ENCODE measurements at regions of chr4 and their contacts with region 1.

Region 1: GRCh38 chr4:83012687-83013419 is 2.2 kb upstream of the LIN54 start:
- DNase-seq: peak; percentile 93 to 99 (median 97)
- ATAC-seq: peak; percentile 94
- H3K4me3 ChIP-seq: peak overlapping the region; percentile 69
- H3K4me3 Mint-ChIP-seq: peak overlapping the region; percentile 89 to 98 (median 94)
- H3K27ac ChIP-seq: peak overlapping the region; percentile 73
- H3K27ac Mint-ChIP-seq: peak overlapping the region; percentile 84 to 98 (median 93)
- H3K4me1 ChIP-seq: peaks cover 15 to 22% of the 10 kb centered on the region in 2 donors
- H3K4me1 Mint-ChIP-seq: peaks cover 32 to 54% (median 46%) of the 10 kb centered on the region in 7 donors
- H3K27me3 ChIP-seq: no peaks in the 10 kb centered on the region
- H3K27me3 Mint-ChIP-seq: no peaks in the 10 kb centered on the region

Region 2: GRCh38 chr4:81494031-81494431 is 1518.8 kb before region 1 on chr4:
- CTCF ChIA-PET with region 1: no interaction called
- POLR2A ChIA-PET with region 1: no interaction called
- intact Hi-C with region 1: loop called in 1 of 2 experiments (anchors 10 kb)
- DNase-seq: peak in 4 of 9 donors; percentile 29 to 46 (median 38)
- ATAC-seq: peak; percentile 33
- H3K4me3 ChIP-seq: peak overlapping the region; percentile 47
- H3K4me3 Mint-ChIP-seq: peak overlapping the region; percentile 47 to 82 (median 76)
- H3K27ac ChIP-seq: peak overlapping the region; percentile 66
- H3K27ac Mint-ChIP-seq: peak overlapping the region; percentile 76 to 99 (median 94)
- H3K4me1 ChIP-seq: peaks cover 27 to 39% of the 10 kb centered on the region in 2 donors
- H3K4me1 Mint-ChIP-seq: peaks cover 27 to 62% (median 49%) of the 10 kb centered on the region in 7 donors
- H3K27me3 ChIP-seq: no peaks in the 10 kb centered on the region
- H3K27me3 Mint-ChIP-seq: peaks cover 0 to 8% (median 0%) of the 10 kb centered on the region in 5 donors

Region 3: DNA sequence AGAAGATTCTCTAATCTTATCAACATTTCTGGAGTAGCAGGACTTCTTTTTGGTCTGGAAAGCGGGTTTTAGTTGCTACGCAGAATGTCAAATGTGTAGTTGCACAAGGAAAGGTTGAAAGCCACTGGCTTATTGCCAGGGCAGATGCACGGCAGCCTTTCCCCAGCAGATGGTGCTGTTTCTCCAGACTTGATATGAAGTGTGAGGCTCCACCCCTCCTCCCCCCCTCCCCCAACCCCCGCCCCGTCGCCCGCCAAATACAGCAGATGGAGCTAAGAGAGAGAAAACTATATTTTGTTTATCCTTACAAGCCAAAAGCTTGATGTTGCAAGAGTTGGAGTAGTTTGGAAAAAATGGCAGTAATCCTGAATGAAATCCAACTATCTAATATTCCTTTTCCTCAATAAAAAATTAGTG is 550.4 kb before region 1 on chr4:
- CTCF ChIA-PET with region 1: no interaction called
- POLR2A ChIA-PET with region 1: no interaction called
- intact Hi-C with region 1: loop called in 1 of 2 experiments (anchors 2 kb)
- DNase-seq: peak; percentile 60 to 83 (median 79)
- ATAC-seq: peak; percentile 96
- H3K4me3 ChIP-seq: no peak overlapping the region
- H3K4me3 Mint-ChIP-seq: no peak overlapping the region
- H3K27ac ChIP-seq: no peak overlapping the region
- H3K27ac Mint-ChIP-seq: peak overlapping the region in 1 of 9 donors; percentile 34
- H3K4me1 ChIP-seq: no peaks in the 10 kb centered on the region
- H3K4me1 Mint-ChIP-seq: peaks cover 0 to 5% (median 0%) of the 10 kb centered on the region in 7 donors
- H3K27me3 ChIP-seq: no peaks in the 10 kb centered on the region
- H3K27me3 Mint-ChIP-seq: no peaks in the 10 kb centered on the region

Region 4: GRCh38 chr4:82551714-82552113 is 461.1 kb before region 1 on chr4:
- CTCF ChIA-PET with region 1: no interaction called
- POLR2A ChIA-PET with region 1: no interaction called
- intact Hi-C with region 1: no loop called
- DNase-seq: no peak
- ATAC-seq: no peak
- H3K4me3 ChIP-seq: no peak overlapping the region
- H3K4me3 Mint-ChIP-seq: no peak overlapping the region
- H3K27ac ChIP-seq: no peak overlapping the region
- H3K27ac Mint-ChIP-seq: no peak overlapping the region
- H3K4me1 ChIP-seq: no peaks in the 10 kb centered on the region
- H3K4me1 Mint-ChIP-seq: peaks cover 0 to 1% (median 0%) of the 10 kb centered on the region in 7 donors
- H3K27me3 ChIP-seq: no peaks in the 10 kb centered on the region
- H3K27me3 Mint-ChIP-seq: peaks cover 14 to 49% (median 25%) of the 10 kb centered on the region in 5 donors

Region 5: DNA sequence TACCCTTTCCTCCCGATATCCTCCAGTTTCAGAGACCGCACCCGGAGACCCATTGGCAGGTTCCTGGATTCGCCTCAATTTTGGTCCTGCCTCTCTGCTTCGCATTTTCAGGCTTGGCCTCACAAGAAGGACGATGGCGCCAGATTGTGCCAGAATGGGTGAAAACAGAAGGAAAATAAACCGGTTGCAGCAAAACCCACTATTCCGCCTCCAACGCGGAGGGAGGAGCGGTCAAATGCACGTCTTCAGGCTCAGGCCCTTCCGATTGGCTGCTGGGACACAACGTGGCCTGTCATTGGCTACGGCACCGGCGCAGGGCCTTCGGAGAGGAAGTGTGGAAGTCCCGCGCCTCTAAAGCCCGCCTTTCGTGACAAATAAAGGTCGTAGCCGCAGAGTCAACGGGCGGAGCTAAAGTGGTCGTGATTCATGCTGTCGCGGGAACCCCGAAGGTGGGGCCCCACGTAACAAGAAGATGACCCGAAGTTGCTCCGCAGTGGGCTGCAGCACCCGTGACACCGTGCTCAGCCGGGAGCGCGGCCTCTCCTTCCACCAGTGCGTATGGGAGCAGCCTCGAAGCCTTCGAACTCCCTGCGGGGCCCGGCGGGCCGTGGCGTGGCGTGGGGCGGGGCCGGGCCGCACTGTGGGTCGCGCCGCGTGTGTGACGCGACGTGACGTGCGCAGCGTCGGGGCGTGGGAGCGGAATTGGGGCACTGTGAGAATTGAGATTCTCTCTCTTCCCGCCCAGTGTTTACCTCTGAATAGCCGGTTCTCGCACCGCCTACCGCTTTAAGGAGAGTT is 112.3 kb before region 1 on chr4 and contains the start of gene THAP9:
- CTCF ChIA-PET with region 1: interaction called, 4 read pairs
- POLR2A ChIA-PET with region 1: interaction called, 33 read pairs
- intact Hi-C with region 1: loop called (anchors 1 kb)
- DNase-seq: peak; percentile 92 to 100 (median 98)
- ATAC-seq: peak; percentile 91
- H3K4me3 ChIP-seq: peak within 1 kb of the TSS; percentile 91
- H3K4me3 Mint-ChIP-seq: no peak within 1 kb of the TSS
- H3K27ac ChIP-seq: peak within 1 kb of the TSS; percentile 98
- H3K27ac Mint-ChIP-seq: no peak within 1 kb of the TSS
- H3K4me1 ChIP-seq: peaks cover 13 to 15% of the 10 kb centered on the region in 2 donors
- H3K4me1 Mint-ChIP-seq: peaks cover 0 to 30% (median 15%) of the 10 kb centered on the region in 7 donors
- H3K27me3 ChIP-seq: no peaks in the 10 kb centered on the region
- H3K27me3 Mint-ChIP-seq: peaks cover 0 to 2% (median 0%) of the 10 kb centered on the region in 5 donors
- total RNA-seq, gene THAP9: 2.2 to 4.9 (median 4.4) TPM

Region 6: GRCh38 chr4:83074086-83074704 is 61.3 kb after region 1 on chr4:
- CTCF ChIA-PET with region 1: no interaction called
- POLR2A ChIA-PET with region 1: no interaction called
- intact Hi-C with region 1: loop called (anchors 2 kb)
- DNase-seq: peak in 8 of 9 donors; percentile 49 to 91 (median 85)
- ATAC-seq: peak; percentile 99
- H3K4me3 ChIP-seq: no peak overlapping the region
- H3K4me3 Mint-ChIP-seq: peak overlapping the region; percentile 43 to 85 (median 76)
- H3K27ac ChIP-seq: no peak overlapping the region
- H3K27ac Mint-ChIP-seq: peak overlapping the region; percentile 19 to 87 (median 79)
- H3K4me1 ChIP-seq: peaks cover 0 to 6% of the 10 kb centered on the region in 2 donors
- H3K4me1 Mint-ChIP-seq: peaks cover 8 to 28% (median 14%) of the 10 kb centered on the region in 7 donors
- H3K27me3 ChIP-seq: no peaks in the 10 kb centered on the region
- H3K27me3 Mint-ChIP-seq: no peaks in the 10 kb centered on the region

Region 7: DNA sequence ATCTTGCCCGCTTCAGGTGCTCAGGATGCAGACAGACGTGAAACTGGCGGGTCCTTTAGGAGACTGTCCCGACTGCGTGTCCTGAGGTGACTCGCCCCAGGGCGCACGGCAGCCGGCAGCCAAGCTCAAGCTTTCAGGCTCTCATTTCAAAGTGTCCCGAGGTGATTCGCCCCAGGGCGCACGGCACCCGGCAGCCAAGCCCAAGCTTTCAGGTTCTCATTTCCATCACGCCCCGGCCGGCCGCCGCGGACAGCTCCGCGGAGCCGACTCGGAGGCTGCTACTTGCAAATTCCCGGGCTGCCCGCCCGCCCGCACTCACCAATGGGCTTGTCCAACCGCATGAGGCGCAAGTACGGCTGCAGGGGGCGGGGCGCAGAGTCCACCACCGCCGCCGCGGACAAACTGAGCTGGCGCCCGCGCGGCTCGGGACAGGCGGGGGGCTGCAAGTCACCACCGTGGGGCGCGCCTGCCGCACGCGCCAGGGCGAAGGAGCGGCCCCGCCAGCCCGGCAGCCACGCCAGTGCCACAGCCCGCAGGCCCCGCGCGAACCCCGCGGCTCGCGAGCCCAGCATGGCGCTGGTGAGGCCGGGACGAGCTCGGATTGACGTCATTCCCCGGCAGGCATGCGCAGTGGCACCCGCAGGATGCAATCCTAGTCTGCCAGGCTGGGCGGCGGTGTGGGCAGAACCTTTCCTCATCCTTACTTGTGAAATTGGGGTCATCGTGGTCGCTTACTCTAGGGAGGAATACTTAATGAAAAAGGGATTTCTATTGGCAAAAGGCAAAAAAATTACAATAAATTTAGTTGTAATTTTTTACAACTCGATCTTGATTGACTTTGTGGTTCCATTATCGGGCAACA is 271.6 kb after region 1 on chr4 and contains the start of gene COQ2:
- CTCF ChIA-PET with region 1: no interaction called
- POLR2A ChIA-PET with region 1: interaction called, 3 read pairs
- intact Hi-C with region 1: loop called (anchors 1 kb)
- DNase-seq: peak; percentile 87 to 96 (median 91)
- ATAC-seq: peak; percentile 91
- H3K4me3 ChIP-seq: peak within 1 kb of the TSS; percentile 96
- H3K4me3 Mint-ChIP-seq: peak within 1 kb of the TSS; percentile 80 to 99 (median 97)
- H3K27ac ChIP-seq: peak within 1 kb of the TSS; percentile 88
- H3K27ac Mint-ChIP-seq: peak within 1 kb of the TSS; percentile 88 to 99 (median 97)
- H3K4me1 ChIP-seq: peaks cover 5 to 8% of the 10 kb centered on the region in 2 donors
- H3K4me1 Mint-ChIP-seq: peaks cover 21 to 47% (median 38%) of the 10 kb centered on the region in 7 donors
- H3K27me3 ChIP-seq: no peaks in the 10 kb centered on the region
- H3K27me3 Mint-ChIP-seq: peaks cover 0 to 3% (median 0%) of the 10 kb centered on the region in 5 donors
- total RNA-seq, gene COQ2: 7.2 to 12.7 (median 10.2) TPM

Region 8: GRCh38 chr4:83837614-83838308 is 824.9 kb after region 1 on chr4:
- CTCF ChIA-PET with region 1: no interaction called
- POLR2A ChIA-PET with region 1: no interaction called
- intact Hi-C with region 1: no loop called
- DNase-seq: no peak
- ATAC-seq: no peak
- H3K4me3 ChIP-seq: no peak overlapping the region
- H3K4me3 Mint-ChIP-seq: no peak overlapping the region
- H3K27ac ChIP-seq: no peak overlapping the region
- H3K27ac Mint-ChIP-seq: no peak overlapping the region
- H3K4me1 ChIP-seq: no peaks in the 10 kb centered on the region
- H3K4me1 Mint-ChIP-seq: no peaks in the 10 kb centered on the region
- H3K27me3 ChIP-seq: no peaks in the 10 kb centered on the region
- H3K27me3 Mint-ChIP-seq: peaks cover 0 to 13% (median 0%) of the 10 kb centered on the region in 5 donors

Measured in naive thymus-derived CD4-positive, alpha-beta T cell (primary cell).